Heart right ventricle (tissue), 16 donors: ENCODE measurements at regions of chr16 and their contacts with region 1.

Region 1: GRCh38 chr16:46673320-46674013 is 15.5 kb downstream of the VPS35 start:
- DNase-seq: peak in 1 of 2 donors; percentile 41
- ATAC-seq: peak; percentile 73 to 94 (median 91)
- H3K4me3 ChIP-seq: no peak overlapping the region
- H3K27ac ChIP-seq: no peak overlapping the region
- H3K4me1 ChIP-seq: no peaks in the 10 kb centered on the region
- H3K27me3 ChIP-seq: no peaks in the 10 kb centered on the region
- CTCF ChIP-seq: peak; percentile 72 to 95 (median 90)

Region 2: DNA sequence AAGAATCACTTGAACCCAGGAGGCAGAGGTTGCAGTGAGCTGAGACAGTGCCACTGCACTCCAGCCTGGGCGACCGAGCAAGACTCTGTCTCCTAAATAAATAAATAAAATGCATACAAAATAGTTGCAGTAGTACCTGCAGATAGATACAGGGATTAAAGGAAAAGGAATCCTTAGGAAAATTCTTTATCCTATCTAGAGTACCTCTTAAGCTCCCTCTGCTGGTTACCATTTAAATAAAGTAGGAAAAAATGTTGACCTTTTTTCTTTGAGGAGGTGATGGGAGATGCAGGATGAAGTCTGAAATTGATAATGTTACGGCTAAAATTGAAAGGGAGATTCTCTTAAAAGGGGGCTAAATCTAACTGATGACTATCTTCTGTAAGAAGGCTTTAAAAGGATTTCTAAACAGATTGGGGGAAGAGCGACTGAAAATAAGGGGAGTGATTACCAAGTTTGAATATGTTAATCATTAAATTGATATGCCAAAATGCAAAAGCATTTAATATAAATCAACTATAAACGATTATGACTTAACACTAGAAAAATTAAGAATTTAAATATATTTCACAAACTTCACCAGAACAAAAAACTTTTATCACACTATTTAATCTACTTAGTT is 128.1 kb after region 1 on chr16:
- intact Hi-C with region 1: loop called in 8 of 10 experiments (anchors 5 to 10 kb)
- DNase-seq: no peak
- ATAC-seq: peak in 3 of 8 donors; percentile 26 to 55 (median 53)
- H3K4me3 ChIP-seq: no peak overlapping the region
- H3K27ac ChIP-seq: no peak overlapping the region
- H3K4me1 ChIP-seq: no peaks in the 10 kb centered on the region
- H3K27me3 ChIP-seq: no peaks in the 10 kb centered on the region
- CTCF ChIP-seq: peak in 8 of 9 donors; percentile 14 to 66 (median 51)

Region 3: GRCh38 chr16:46908540-46909372 is 235.3 kb after region 1 on chr16:
- intact Hi-C with region 1: loop called in 7 of 10 experiments (anchors 5 to 10 kb)
- DNase-seq: peak in 1 of 2 donors; percentile 43
- ATAC-seq: peak; percentile 33 to 73 (median 64)
- H3K4me3 ChIP-seq: no peak overlapping the region
- H3K27ac ChIP-seq: no peak overlapping the region
- H3K4me1 ChIP-seq: peaks cover 0 to 7% (median 0%) of the 10 kb centered on the region in 9 donors
- H3K27me3 ChIP-seq: no peaks in the 10 kb centered on the region
- CTCF ChIP-seq: peak; percentile 60 to 91 (median 77)

Region 4: DNA sequence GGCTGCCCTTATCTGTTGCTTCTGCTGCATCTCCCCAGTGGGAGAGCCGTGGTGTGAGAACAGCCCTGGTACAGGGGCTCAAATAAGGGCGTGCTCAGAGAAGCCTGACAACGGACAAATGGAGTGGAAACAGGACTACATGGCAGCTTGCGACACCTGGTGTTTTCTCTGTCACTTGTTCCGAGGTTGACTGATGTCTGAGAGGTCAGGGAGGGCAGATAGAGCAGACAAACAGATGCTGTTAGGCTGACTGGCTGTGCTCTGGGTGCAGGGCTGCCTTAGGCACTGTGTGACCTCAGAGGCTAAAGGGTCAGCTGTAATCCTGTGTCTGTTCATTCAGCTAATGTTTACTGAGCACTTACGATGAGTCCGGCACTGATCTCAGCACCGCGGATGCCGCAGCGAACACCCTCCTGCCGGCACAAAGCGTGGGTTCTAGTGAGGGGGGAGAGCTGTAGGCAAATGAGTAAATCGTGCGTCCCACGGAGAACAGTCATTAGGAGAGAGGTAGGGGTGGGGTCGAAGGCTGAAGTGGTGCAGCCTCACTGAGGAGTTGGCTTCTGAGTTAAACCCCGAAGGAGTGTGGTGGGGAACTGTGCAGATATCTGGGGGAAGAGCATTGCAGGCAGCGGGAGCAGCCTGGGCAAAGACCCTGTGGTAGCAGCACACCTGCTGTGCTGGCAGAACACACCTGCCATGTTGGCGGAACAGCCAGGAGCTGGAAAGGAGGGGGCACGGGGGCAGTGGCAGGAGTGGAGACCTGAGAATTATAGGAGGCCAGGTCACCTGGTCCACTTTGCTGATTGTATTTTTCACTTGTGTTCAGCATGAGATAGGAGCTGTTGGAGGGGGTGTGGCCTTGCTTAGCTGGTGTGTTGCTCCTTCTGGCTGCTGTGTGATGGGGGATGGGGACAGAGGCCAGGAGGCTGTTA is 245.7 kb after region 1 on chr16:
- intact Hi-C with region 1: loop called in 1 of 10 experiments (anchors 10 kb)
- DNase-seq: no peak
- ATAC-seq: no peak
- H3K4me3 ChIP-seq: no peak overlapping the region
- H3K27ac ChIP-seq: no peak overlapping the region
- H3K4me1 ChIP-seq: peaks cover 0 to 8% (median 0%) of the 10 kb centered on the region in 9 donors
- H3K27me3 ChIP-seq: no peaks in the 10 kb centered on the region
- CTCF ChIP-seq: no peak